Activated B cell treated with CpG ODN at 0.5 μM for 24 hours (primary cell): ENCODE measurements at regions of chr9 and their contacts with region 1.

Region 1: DNA sequence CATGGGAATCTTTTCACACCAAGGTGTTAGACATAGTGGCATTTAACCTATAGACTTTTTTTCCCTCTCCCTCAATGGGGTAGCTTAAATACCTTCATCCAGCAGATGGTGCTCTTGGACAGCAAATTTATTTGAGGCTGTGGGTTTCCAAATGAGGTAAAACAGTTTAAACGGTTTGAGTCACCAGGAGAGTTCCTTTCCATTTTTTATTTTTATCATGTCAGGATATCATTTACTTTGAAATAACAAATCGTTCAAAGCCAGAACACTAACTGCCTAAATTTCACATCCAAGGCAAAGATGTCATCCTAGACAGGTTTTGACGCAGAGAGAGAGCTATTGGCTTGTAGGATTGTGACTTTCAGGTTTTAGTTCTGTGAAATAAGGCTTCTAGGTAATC is 69.7 kb downstream of the KDM4C start:
- DNase-seq: no peak
- ATAC-seq: peak; percentile 42
- H3K4me3 Mint-ChIP-seq: no peak overlapping the region
- H3K27ac Mint-ChIP-seq: no peak overlapping the region
- H3K4me1 Mint-ChIP-seq: peaks cover 14% of the 10 kb centered on the region
- H3K27me3 Mint-ChIP-seq: no peaks in the 10 kb centered on the region
- CTCF ChIP-seq: no peak

Region 2: GRCh38 chr9:6944896-6945295 is 117.5 kb after region 1 on chr9:
- CTCF ChIA-PET with region 1: no interaction called
- POLR2A ChIA-PET with region 1: interaction called, 10 read pairs
- intact Hi-C with region 1: no loop called
- DNase-seq: no peak
- ATAC-seq: no peak
- H3K4me3 Mint-ChIP-seq: no peak overlapping the region
- H3K27ac Mint-ChIP-seq: no peak overlapping the region
- H3K4me1 Mint-ChIP-seq: peaks cover 16% of the 10 kb centered on the region
- H3K27me3 Mint-ChIP-seq: no peaks in the 10 kb centered on the region
- CTCF ChIP-seq: no peak

Region 3: GRCh38 chr9:7055201-7055903 is 227.9 kb after region 1 on chr9:
- CTCF ChIA-PET with region 1: interaction called, 4 read pairs
- POLR2A ChIA-PET with region 1: no interaction called
- intact Hi-C with region 1: loop called (anchors 1 kb)
- DNase-seq: no peak
- ATAC-seq: no peak
- H3K4me3 Mint-ChIP-seq: no peak overlapping the region
- H3K27ac Mint-ChIP-seq: no peak overlapping the region
- H3K4me1 Mint-ChIP-seq: peaks cover 2% of the 10 kb centered on the region
- H3K27me3 Mint-ChIP-seq: no peaks in the 10 kb centered on the region
- CTCF ChIP-seq: no peak